B cell (primary cell): ENCODE measurements at regions of chr2 and their contacts with region 1.

Region 1: DNA sequence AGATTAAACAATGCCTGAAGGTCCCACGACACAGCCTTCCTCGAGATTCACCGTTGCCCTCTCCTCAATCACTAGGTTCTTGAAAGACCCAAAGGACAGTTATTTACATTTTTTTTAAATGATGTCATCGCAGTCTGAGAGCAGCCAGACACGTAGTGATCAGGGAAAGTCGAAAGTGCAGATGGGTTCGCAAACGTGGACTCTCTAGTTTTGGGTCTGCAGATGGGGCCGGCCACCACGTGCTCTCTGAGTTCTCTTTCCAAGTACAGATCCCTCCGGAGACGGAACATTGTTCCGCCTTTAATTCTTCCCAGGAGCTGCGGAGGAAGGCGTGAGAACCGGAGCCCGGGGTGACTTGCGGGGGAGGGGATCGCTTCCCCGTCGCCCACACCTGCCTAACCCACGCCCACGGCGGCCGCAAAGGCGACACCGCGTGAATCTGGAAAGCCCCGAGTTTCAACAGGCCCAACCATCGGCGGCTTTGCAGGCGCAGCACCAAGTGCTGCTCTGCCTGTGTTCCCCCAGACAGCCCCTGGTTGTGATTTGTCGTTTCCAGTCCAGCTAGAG is 54.3 kb downstream of the PKDCC start:
- DNase-seq: peak; percentile 98
- ATAC-seq: peak; percentile 69
- H3K4me3 ChIP-seq: peak overlapping the region; percentile 34 to 70 (median 52)
- H3K4me3 Mint-ChIP-seq: peak overlapping the region; percentile 88
- H3K27ac ChIP-seq: peak overlapping the region; percentile 98 to 99
- H3K27ac Mint-ChIP-seq: no peak overlapping the region
- H3K4me1 ChIP-seq: peaks cover 91 to 97% of the 10 kb centered on the region in 2 donors
- H3K4me1 Mint-ChIP-seq: peaks cover 70% of the 10 kb centered on the region
- H3K27me3 ChIP-seq: no peaks in the 10 kb centered on the region
- H3K27me3 Mint-ChIP-seq: no peaks in the 10 kb centered on the region
- CTCF ChIP-seq: no peak

Region 2: DNA sequence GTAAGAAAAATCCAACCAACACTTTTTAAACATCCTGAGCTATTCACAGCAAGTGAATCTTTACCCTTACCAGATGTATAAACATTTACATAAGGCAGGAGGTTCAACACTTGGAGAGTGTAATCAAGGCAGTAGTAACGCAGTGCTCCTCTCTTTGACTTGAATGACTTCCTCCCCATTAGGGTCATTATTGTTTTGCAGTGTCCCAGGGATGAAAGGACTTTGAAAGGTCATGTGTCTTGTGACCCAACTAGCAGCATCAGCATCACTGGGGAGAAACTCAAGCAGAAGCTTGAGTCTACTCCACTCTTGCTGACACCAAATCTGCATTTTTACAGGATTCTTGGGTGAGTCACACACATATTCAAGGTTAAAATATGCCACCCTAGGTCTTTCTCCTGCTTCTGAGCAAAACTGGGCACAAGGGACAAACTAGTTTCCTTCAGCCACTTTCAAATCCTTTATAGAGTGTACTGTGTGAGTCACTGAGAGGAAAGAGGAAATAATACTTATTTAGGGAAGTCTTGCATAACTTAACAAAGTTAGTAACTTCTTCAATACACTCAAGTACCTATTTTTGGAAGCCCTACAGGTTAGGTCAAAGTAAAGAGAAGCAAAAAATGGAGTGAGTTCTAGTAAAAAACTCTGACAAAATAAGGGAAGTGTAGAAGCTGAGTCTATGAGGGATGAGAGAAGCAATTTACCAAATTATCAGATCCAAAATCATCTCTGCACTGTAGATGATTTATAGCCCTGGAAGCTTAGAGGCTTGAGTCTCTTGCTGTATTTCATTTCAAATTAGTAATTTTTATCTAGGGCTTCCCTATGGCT is 16.0 kb after region 1 on chr2:
- CTCF ChIA-PET with region 1: interaction called, 37 read pairs
- POLR2A ChIA-PET with region 1: interaction called, 28 read pairs
- intact Hi-C with region 1: loop called (anchors 1 kb)
- DNase-seq: peak; percentile 83
- ATAC-seq: peak; percentile 87
- H3K4me3 ChIP-seq: peak overlapping the region in 3 of 5 experiments; percentile 7 to 16 (median 11)
- H3K4me3 Mint-ChIP-seq: peak overlapping the region; percentile 40
- H3K27ac ChIP-seq: peak overlapping the region; percentile 62 to 75
- H3K27ac Mint-ChIP-seq: peak overlapping the region; percentile 69
- H3K4me1 ChIP-seq: peaks cover 48% of the 10 kb centered on the region in 2 donors
- H3K4me1 Mint-ChIP-seq: peaks cover 61% of the 10 kb centered on the region
- H3K27me3 ChIP-seq: no peaks in the 10 kb centered on the region
- H3K27me3 Mint-ChIP-seq: no peaks in the 10 kb centered on the region
- CTCF ChIP-seq: no peak

Region 3: DNA sequence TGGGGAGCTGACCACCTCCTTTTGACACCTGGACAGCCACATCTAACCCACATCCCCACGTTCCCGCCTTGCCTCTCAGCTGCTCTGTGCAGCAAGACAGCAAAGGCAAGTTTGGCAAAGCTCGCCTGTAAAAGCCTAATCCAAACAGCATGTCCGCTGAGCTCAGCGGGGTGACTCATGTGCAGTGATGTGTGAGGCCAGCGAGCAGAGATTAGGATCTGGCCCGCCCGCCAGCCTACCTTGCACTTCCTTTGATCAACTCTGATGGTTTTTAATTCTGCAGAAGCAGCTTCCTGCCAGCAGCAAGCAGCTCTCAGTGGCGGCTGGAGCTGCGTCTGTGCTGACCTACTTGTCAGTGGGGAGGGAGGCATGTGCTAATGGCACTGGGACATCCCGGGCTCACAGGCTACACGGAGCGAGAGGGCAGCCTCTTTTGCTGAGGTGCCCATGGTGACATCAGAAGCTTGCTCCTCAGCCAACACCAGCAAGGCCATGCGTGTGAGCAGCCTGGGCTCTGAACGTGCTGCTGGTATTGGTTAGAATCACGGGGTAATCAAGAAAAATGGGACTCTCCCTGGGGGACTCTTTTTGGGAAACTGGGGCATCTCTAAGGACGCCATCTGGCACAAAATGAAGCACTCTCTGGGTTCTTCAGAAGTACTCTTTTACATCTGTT is 31.0 kb after region 1 on chr2:
- CTCF ChIA-PET with region 1: interaction called, 19 read pairs
- POLR2A ChIA-PET with region 1: interaction called, 20 read pairs
- intact Hi-C with region 1: loop called (anchors 1 kb)
- DNase-seq: peak; percentile 89
- ATAC-seq: peak; percentile 90
- H3K4me3 ChIP-seq: peak overlapping the region in 4 of 5 experiments; percentile 2 to 36 (median 15)
- H3K4me3 Mint-ChIP-seq: peak overlapping the region; percentile 81
- H3K27ac ChIP-seq: peak overlapping the region; percentile 71 to 73
- H3K27ac Mint-ChIP-seq: peak overlapping the region; percentile 94
- H3K4me1 ChIP-seq: peaks cover 71% of the 10 kb centered on the region in 2 donors
- H3K4me1 Mint-ChIP-seq: peaks cover 74% of the 10 kb centered on the region
- H3K27me3 ChIP-seq: no peaks in the 10 kb centered on the region
- H3K27me3 Mint-ChIP-seq: no peaks in the 10 kb centered on the region
- CTCF ChIP-seq: no peak

Region 4: GRCh38 chr2:42163444-42164045 is 61.4 kb after region 1 on chr2:
- CTCF ChIA-PET with region 1: interaction called, 82 read pairs
- POLR2A ChIA-PET with region 1: interaction called, 11 read pairs
- intact Hi-C with region 1: no loop called
- DNase-seq: no peak
- ATAC-seq: no peak
- H3K4me3 ChIP-seq: no peak overlapping the region
- H3K4me3 Mint-ChIP-seq: no peak overlapping the region
- H3K27ac ChIP-seq: no peak overlapping the region
- H3K27ac Mint-ChIP-seq: peak overlapping the region; percentile 33
- H3K4me1 ChIP-seq: peaks cover 7 to 13% of the 10 kb centered on the region in 2 donors
- H3K4me1 Mint-ChIP-seq: peaks cover 34% of the 10 kb centered on the region
- H3K27me3 ChIP-seq: no peaks in the 10 kb centered on the region
- H3K27me3 Mint-ChIP-seq: no peaks in the 10 kb centered on the region
- CTCF ChIP-seq: no peak

Region 5: GRCh38 chr2:42169100-42169873 is 67.2 kb after region 1 on chr2 and contains the start of gene EML4:
- CTCF ChIA-PET with region 1: interaction called, 82 read pairs
- POLR2A ChIA-PET with region 1: interaction called, 11 read pairs
- intact Hi-C with region 1: loop called (anchors 1 kb)
- DNase-seq: peak; percentile 96
- ATAC-seq: peak; percentile 89
- H3K4me3 ChIP-seq: peak within 1 kb of the TSS; percentile 77 to 98 (median 88)
- H3K4me3 Mint-ChIP-seq: no peak within 1 kb of the TSS
- H3K27ac ChIP-seq: peak within 1 kb of the TSS; percentile 88 to 91
- H3K27ac Mint-ChIP-seq: no peak within 1 kb of the TSS
- H3K4me1 ChIP-seq: peaks cover 38 to 40% of the 10 kb centered on the region in 2 donors
- H3K4me1 Mint-ChIP-seq: peaks cover 28% of the 10 kb centered on the region
- H3K27me3 ChIP-seq: no peaks in the 10 kb centered on the region
- H3K27me3 Mint-ChIP-seq: no peaks in the 10 kb centered on the region
- CTCF ChIP-seq: no peak
- total RNA-seq, gene EML4: 134 and 138 TPM in 2 replicates

Region 6: DNA sequence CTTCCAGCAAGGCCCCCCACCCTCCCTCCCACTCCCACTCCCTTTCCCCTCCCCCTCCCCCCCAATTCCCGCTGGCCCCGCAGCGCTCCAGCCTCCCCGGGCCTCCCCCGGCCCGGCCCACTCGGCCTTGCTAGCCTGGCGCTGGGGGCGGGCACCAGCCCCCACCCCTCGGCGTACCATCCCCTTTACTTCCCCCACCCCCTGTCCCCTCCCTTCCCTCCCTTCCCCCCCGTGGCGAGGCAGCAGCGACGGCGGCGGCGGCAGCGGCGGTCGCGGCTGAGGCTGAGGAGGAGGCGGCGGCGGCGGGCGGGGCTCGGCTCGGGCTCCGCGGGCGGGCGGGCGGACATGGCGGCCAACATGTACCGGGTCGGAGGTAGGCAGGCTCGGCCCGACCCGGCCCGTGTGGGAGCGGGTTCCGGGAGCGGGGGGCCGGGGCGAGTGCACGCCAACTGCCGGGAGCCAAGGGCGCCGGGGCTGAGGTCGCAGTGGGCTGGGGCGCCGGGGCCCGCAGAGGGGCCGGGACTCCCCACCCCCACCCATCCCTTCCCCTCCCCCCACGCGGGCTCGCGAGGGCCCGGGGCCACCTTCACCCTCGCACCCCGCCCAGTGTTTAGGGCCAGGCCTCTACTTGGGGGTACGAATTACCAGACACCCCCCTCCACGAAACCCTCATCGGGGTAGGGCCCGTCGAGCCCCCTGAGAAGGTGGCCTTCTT is 466.5 kb after region 1 on chr2 and contains the start of gene MTA3:
- CTCF ChIA-PET with region 1: no interaction called
- POLR2A ChIA-PET with region 1: no interaction called
- intact Hi-C with region 1: loop called (anchors 5 kb)
- DNase-seq: peak; percentile 74
- ATAC-seq: peak; percentile 67
- H3K4me3 ChIP-seq: peak within 1 kb of the TSS; percentile 26 to 80 (median 70)
- H3K4me3 Mint-ChIP-seq: peak within 1 kb of the TSS; percentile 96
- H3K27ac ChIP-seq: peak within 1 kb of the TSS; percentile 18 to 67
- H3K27ac Mint-ChIP-seq: peak within 1 kb of the TSS; percentile 90
- H3K4me1 ChIP-seq: peaks cover 21 to 26% of the 10 kb centered on the region in 2 donors
- H3K4me1 Mint-ChIP-seq: peaks cover 31% of the 10 kb centered on the region
- H3K27me3 ChIP-seq: no peaks in the 10 kb centered on the region
- H3K27me3 Mint-ChIP-seq: no peaks in the 10 kb centered on the region
- CTCF ChIP-seq: no peak
- total RNA-seq, gene MTA3: 33.2 and 40.1 TPM in 2 replicates

Region 7: GRCh38 chr2:43158259-43158880 is 1056.3 kb after region 1 on chr2:
- CTCF ChIA-PET with region 1: no interaction called
- POLR2A ChIA-PET with region 1: no interaction called
- intact Hi-C with region 1: loop called (anchors 10 kb)
- DNase-seq: no peak
- ATAC-seq: peak; percentile 7
- H3K4me3 ChIP-seq: peak overlapping the region in 1 of 5 experiments; percentile 14
- H3K4me3 Mint-ChIP-seq: peak overlapping the region; percentile 81
- H3K27ac ChIP-seq: peak overlapping the region; percentile 80 to 84
- H3K27ac Mint-ChIP-seq: peak overlapping the region; percentile 97
- H3K4me1 ChIP-seq: peaks cover 27 to 51% of the 10 kb centered on the region in 2 donors
- H3K4me1 Mint-ChIP-seq: peaks cover 57% of the 10 kb centered on the region
- H3K27me3 ChIP-seq: no peaks in the 10 kb centered on the region
- H3K27me3 Mint-ChIP-seq: no peaks in the 10 kb centered on the region
- CTCF ChIP-seq: no peak